ENCODE measurements at regions of chr11 and their contacts with region 1.

Region 1: GRCh38 chr11:134272381-134273316 is 3.5 kb upstream of the GLB1L3 start:
- DNase-seq: no peak
- ATAC-seq: no peak
- H3K4me3 ChIP-seq: no peak overlapping the region
- H3K4me3 Mint-ChIP-seq: no peak overlapping the region
- H3K27ac ChIP-seq: no peak overlapping the region
- H3K27ac Mint-ChIP-seq: no peak overlapping the region
- H3K4me1 ChIP-seq: peaks cover 21 to 35% of the 10 kb centered on the region in 2 donors
- H3K4me1 Mint-ChIP-seq: peaks cover 21% of the 10 kb centered on the region
- H3K27me3 ChIP-seq: peaks cover 1 to 55% (median 46%) of the 10 kb centered on the region in 4 experiments
- H3K27me3 Mint-ChIP-seq: peaks cover 66% of the 10 kb centered on the region
- CTCF ChIP-seq: no peak

Region 2: GRCh38 chr11:134261626-134262488 is 10.8 kb before region 1 on chr11:
- CTCF ChIA-PET with region 1: interaction called, 10 read pairs
- POLR2A ChIA-PET with region 1: no interaction called
- intact Hi-C with region 1: no loop called
- DNase-seq: no peak
- ATAC-seq: no peak
- H3K4me3 ChIP-seq: no peak overlapping the region
- H3K4me3 Mint-ChIP-seq: no peak overlapping the region
- H3K27ac ChIP-seq: no peak overlapping the region
- H3K27ac Mint-ChIP-seq: no peak overlapping the region
- H3K4me1 ChIP-seq: no peaks in the 10 kb centered on the region
- H3K4me1 Mint-ChIP-seq: no peaks in the 10 kb centered on the region
- H3K27me3 ChIP-seq: no peaks in the 10 kb centered on the region
- H3K27me3 Mint-ChIP-seq: no peaks in the 10 kb centered on the region
- CTCF ChIP-seq: peak; percentile 21

Region 3: DNA sequence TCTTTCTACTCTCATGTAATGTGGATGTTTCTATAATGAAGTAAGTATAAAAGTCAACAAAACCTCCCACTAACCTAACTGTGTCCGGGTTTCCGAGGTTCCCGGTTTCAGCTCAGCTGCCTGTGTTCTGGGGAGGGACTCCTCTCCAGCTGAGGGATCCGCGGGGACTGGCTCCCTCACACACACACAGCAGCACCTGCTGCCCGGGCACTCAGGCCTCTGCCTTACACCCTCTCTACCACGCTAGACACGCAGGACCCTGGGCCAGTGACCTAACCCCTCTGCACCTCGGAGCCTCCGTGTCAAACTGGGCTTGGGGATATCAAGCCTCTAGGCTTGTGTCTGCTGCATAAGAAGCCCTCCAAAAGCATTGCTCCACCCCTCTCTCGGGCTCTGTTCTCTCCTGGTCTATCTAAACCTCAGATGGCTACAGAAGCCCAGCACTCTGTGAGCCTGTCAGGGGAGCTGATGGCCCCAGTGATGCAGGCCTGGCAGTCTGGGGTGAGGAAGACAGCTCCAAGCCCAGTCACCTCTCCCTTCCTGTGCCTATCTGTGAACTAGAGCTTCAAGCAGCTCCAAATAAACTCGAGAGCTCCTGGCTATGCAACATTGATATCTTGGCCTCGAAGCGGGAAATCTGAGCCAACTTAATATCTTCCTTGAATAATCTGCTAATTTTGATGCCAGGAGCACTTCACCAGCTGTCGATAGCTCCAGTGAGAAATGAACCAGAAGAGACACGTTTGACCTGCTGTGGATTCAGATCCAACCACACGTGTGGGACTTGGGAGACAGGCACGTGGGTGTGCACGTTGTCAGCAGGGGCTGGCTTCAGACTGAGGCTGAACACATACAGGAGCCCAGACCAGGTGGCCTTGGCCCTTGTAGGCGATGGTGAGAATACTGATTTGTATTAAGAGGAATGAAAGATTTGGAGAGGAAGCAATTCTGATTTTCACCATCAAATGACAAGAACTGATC is 372.1 kb after region 1 on chr11:
- CTCF ChIA-PET with region 1: no interaction called
- POLR2A ChIA-PET with region 1: no interaction called
- intact Hi-C with region 1: no loop called
- DNase-seq: no peak
- ATAC-seq: no peak
- H3K4me3 ChIP-seq: no peak overlapping the region
- H3K4me3 Mint-ChIP-seq: no peak overlapping the region
- H3K27ac ChIP-seq: no peak overlapping the region
- H3K27ac Mint-ChIP-seq: no peak overlapping the region
- H3K4me1 ChIP-seq: no peaks in the 10 kb centered on the region
- H3K4me1 Mint-ChIP-seq: no peaks in the 10 kb centered on the region
- H3K27me3 ChIP-seq: no peaks in the 10 kb centered on the region
- H3K27me3 Mint-ChIP-seq: peaks cover 2% of the 10 kb centered on the region
- CTCF ChIP-seq: no peak